ENCODE measurements at regions of chr9 and their contacts with region 1.

Region 1: DNA sequence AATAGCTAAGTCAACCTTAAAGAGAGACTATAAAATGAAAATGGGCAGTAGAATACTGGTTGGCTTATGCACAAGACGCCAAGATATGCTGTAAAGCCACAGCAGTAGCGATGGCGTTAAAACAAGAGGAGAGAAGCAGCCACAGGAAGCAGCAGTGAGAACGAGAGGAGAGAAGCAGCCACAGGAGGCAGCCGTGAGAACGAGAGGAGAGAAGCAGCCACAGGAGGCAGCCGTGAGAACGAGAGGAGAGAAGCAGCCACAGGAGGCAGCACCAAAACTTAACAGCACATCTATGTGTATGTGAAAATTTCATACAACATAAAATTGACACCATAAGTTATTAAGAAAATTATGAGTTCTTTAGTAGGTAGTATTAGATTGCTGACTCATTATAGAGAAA is 2318.6 kb upstream of the ACO1 start:
- DNase-seq: no peak
- H3K4me3 ChIP-seq: no peak overlapping the region
- H3K27ac ChIP-seq: no peak overlapping the region
- H3K4me1 ChIP-seq: no peaks in the 10 kb centered on the region
- H3K27me3 ChIP-seq: no peaks in the 10 kb centered on the region
- CTCF ChIP-seq: no peak
- EP300 ChIP-seq: no peak
- POLR2A ChIP-seq: no peak

Region 2: GRCh38 chr9:29773676-29774075 is 292.2 kb before region 1 on chr9:
- in situ Hi-C with region 1: no loop called
- intact Hi-C with region 1: no loop called
- DNase-seq: no peak
- H3K4me3 ChIP-seq: no peak overlapping the region
- H3K27ac ChIP-seq: no peak overlapping the region
- H3K4me1 ChIP-seq: no peaks in the 10 kb centered on the region
- H3K27me3 ChIP-seq: no peaks in the 10 kb centered on the region
- CTCF ChIP-seq: no peak
- EP300 ChIP-seq: no peak
- POLR2A ChIP-seq: no peak

Region 3: DNA sequence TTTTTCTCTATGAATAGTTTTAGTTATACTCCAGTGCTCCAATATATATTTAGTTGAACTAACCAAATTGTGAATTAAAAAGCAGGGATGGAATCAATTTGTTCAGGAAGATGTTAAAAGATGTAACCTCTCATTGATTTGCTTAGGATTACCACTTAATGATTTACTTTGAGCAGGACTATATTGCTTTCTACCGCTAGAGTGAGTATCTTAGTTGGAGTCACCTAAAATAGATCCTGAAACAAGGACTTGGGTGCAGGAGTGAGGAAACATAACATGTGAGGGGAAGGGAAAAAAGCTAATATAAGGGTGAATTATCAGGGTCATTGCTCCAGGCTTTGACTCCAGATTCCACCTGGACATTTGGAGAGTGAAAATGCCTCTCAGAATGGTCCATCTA is 215.2 kb before region 1 on chr9:
- in situ Hi-C with region 1: no loop called
- intact Hi-C with region 1: no loop called
- DNase-seq: no peak
- H3K4me3 ChIP-seq: no peak overlapping the region
- H3K27ac ChIP-seq: no peak overlapping the region
- H3K4me1 ChIP-seq: no peaks in the 10 kb centered on the region
- H3K27me3 ChIP-seq: no peaks in the 10 kb centered on the region
- CTCF ChIP-seq: no peak
- EP300 ChIP-seq: no peak
- POLR2A ChIP-seq: no peak

Region 4: DNA sequence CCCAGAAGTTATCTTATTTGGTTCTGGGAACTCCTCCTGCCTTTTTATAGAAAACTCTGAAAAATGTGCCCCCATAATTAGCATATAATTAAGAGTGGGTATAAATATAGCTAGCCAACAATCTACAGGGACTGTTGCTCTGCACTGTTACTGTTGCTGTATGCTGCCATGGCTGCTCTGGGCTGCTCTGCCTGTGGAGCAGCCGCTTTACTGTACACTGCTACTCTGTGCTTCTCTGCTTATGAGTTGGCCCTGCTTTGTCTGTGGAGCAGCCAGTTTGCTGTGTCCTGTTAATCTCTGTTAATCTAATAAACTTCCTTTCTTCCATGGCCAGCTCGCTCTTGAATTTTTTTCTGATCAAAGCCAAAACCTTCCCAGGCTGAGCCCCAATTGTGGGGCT is 74.5 kb after region 1 on chr9:
- in situ Hi-C with region 1: no loop called
- intact Hi-C with region 1: no loop called
- DNase-seq: no peak
- H3K4me3 ChIP-seq: no peak overlapping the region
- H3K27ac ChIP-seq: no peak overlapping the region
- H3K4me1 ChIP-seq: no peaks in the 10 kb centered on the region
- H3K27me3 ChIP-seq: no peaks in the 10 kb centered on the region
- CTCF ChIP-seq: no peak
- EP300 ChIP-seq: no peak
- POLR2A ChIP-seq: no peak

Region 5: DNA sequence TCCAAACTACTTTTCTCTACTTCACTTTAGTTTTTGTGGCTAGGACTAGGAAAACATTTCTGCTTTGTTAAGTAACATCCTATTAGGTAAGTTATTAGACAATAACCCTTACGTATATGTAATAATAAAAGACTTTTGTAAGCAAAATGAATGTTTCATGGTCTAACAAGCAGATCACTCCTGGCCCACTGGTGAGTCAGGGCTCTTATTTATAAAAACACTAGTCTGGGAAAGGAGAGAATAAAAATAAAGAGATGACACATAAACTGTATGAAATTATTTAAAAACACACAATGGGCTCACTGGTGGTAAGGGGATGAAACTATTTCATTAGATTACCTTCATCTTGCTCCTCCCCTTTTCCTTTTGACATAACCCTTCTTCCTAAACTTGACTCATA is 106.3 kb after region 1 on chr9:
- in situ Hi-C with region 1: loop called in 1 of 4 experiments (anchors 25 kb)
- intact Hi-C with region 1: no loop called
- DNase-seq: no peak
- H3K4me3 ChIP-seq: no peak overlapping the region
- H3K27ac ChIP-seq: no peak overlapping the region
- H3K4me1 ChIP-seq: no peaks in the 10 kb centered on the region
- H3K27me3 ChIP-seq: no peaks in the 10 kb centered on the region
- CTCF ChIP-seq: no peak
- EP300 ChIP-seq: no peak
- POLR2A ChIP-seq: no peak